ENCODE measurements at regions of chr14 and their contacts with region 1.

Region 1: GRCh38 chr14:52455291-52456088 is 96.8 kb downstream of the TXNDC16 start:
- DNase-seq: no peak
- H3K4me3 Mint-ChIP-seq: no peak overlapping the region
- H3K27ac Mint-ChIP-seq: no peak overlapping the region
- H3K4me1 Mint-ChIP-seq: peaks cover 7% of the 10 kb centered on the region
- H3K27me3 Mint-ChIP-seq: no peaks in the 10 kb centered on the region

Region 2: DNA sequence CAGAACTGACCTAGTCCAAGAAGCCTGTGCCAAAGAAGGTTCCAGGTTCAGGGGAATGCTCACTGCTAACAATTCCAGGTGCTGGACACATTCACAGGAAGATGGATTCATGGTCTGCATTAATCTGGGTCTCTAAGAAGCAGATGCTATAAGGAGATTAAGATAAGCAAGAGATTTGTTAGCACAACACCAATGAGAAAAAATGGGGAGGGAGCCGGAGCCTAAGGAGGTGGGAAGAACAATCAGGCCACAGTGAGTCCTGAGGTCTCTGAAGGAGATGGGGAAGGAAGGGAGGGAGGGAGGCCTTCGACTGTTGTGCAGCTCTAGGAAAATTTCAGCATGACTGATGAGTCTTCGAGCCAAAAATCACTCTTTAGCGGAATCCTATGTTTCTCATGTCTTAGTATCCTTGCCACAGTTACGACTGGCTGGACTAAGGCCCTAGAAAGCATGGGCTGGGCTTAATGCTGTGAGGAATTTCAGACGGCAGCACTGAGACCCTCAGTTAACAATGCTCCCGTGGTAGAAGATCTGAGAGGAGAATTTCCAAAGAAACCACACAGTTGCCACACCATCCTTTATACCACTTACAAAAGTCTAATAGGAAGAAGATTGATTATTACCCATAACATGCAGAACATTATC is 219.5 kb before region 1 on chr14:
- CTCF ChIA-PET with region 1: no interaction called
- POLR2A ChIA-PET with region 1: no interaction called
- intact Hi-C with region 1: no loop called
- DNase-seq: no peak
- H3K4me3 Mint-ChIP-seq: no peak overlapping the region
- H3K27ac Mint-ChIP-seq: no peak overlapping the region
- H3K4me1 Mint-ChIP-seq: peaks cover 13% of the 10 kb centered on the region
- H3K27me3 Mint-ChIP-seq: peaks cover 3% of the 10 kb centered on the region

Region 3: GRCh38 chr14:52299692-52300278 is 155.7 kb before region 1 on chr14:
- CTCF ChIA-PET with region 1: interaction called, 10 read pairs
- POLR2A ChIA-PET with region 1: no interaction called
- intact Hi-C with region 1: no loop called
- DNase-seq: no peak
- H3K4me3 Mint-ChIP-seq: no peak overlapping the region
- H3K27ac Mint-ChIP-seq: no peak overlapping the region
- H3K4me1 Mint-ChIP-seq: peaks cover 34% of the 10 kb centered on the region
- H3K27me3 Mint-ChIP-seq: no peaks in the 10 kb centered on the region

Region 4: GRCh38 chr14:52351233-52352060 is 104.0 kb before region 1 on chr14:
- CTCF ChIA-PET with region 1: interaction called, 3 read pairs
- POLR2A ChIA-PET with region 1: no interaction called
- intact Hi-C with region 1: loop called (anchors 2 kb)
- DNase-seq: no peak
- H3K4me3 Mint-ChIP-seq: peak overlapping the region; percentile 42
- H3K27ac Mint-ChIP-seq: peak overlapping the region; percentile 84
- H3K4me1 Mint-ChIP-seq: peaks cover 66% of the 10 kb centered on the region
- H3K27me3 Mint-ChIP-seq: no peaks in the 10 kb centered on the region

Region 5: GRCh38 chr14:52402812-52403526 is 52.5 kb before region 1 on chr14:
- CTCF ChIA-PET with region 1: no interaction called
- POLR2A ChIA-PET with region 1: interaction called, 3 read pairs
- intact Hi-C with region 1: loop called (anchors 5 kb)
- DNase-seq: peak; percentile 51
- H3K4me3 Mint-ChIP-seq: no peak overlapping the region
- H3K27ac Mint-ChIP-seq: peak overlapping the region; percentile 16
- H3K4me1 Mint-ChIP-seq: peaks cover 59% of the 10 kb centered on the region
- H3K27me3 Mint-ChIP-seq: peaks cover 15% of the 10 kb centered on the region

Region 6: GRCh38 chr14:52467515-52468266 is 12.2 kb after region 1 on chr14:
- CTCF ChIA-PET with region 1: interaction called, 3 read pairs
- POLR2A ChIA-PET with region 1: no interaction called
- intact Hi-C with region 1: loop called (anchors 1 kb)
- DNase-seq: peak; percentile 15
- H3K4me3 Mint-ChIP-seq: no peak overlapping the region
- H3K27ac Mint-ChIP-seq: no peak overlapping the region
- H3K4me1 Mint-ChIP-seq: peaks cover 8% of the 10 kb centered on the region
- H3K27me3 Mint-ChIP-seq: no peaks in the 10 kb centered on the region